B cell (primary cell): ENCODE measurements at regions of chr15 and their contacts with region 1.

Region 1: GRCh38 chr15:74956648-74957300 is at the start of gene RPP25:
- DNase-seq: peak; percentile 84
- ATAC-seq: peak; percentile 91
- H3K4me3 ChIP-seq: peak within 1 kb of the TSS; percentile 39 to 80 (median 53)
- H3K4me3 Mint-ChIP-seq: peak within 1 kb of the TSS; percentile 85
- H3K27ac ChIP-seq: no peak within 1 kb of the TSS
- H3K27ac Mint-ChIP-seq: no peak within 1 kb of the TSS
- H3K4me1 ChIP-seq: peaks cover 38 to 40% of the 10 kb centered on the region in 2 donors
- H3K4me1 Mint-ChIP-seq: peaks cover 30% of the 10 kb centered on the region
- H3K27me3 ChIP-seq: peaks cover 0 to 64% (median 37%) of the 10 kb centered on the region in 4 experiments
- H3K27me3 Mint-ChIP-seq: peaks cover 43% of the 10 kb centered on the region
- CTCF ChIP-seq: no peak
- total RNA-seq, gene RPP25: 3.1 and 4.4 TPM in 2 replicates

Region 2: DNA sequence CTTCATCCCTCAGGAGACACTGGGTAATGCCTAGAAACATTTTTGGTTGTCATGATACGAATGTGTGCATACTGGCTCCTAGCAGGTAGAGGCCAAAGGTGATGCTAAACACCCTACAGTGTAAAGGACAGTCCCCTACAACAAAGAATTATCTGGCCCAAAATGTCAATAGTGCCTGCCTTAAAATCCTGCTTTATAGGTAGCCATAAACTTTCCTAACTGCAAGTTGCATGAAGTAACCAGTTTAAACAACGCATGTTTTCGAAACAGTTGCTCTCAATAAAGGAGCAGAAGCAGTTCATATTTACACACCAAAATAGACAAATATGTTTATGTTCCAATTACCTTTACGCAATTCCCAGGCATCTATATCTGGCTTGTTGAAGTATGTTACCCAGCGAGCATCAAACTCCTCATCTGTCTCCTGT is 28.0 kb before region 1 on chr15:
- CTCF ChIA-PET with region 1: no interaction called
- POLR2A ChIA-PET with region 1: no interaction called
- intact Hi-C with region 1: no loop called
- DNase-seq: no peak
- ATAC-seq: no peak
- H3K4me3 ChIP-seq: no peak overlapping the region
- H3K4me3 Mint-ChIP-seq: no peak overlapping the region
- H3K27ac ChIP-seq: no peak overlapping the region
- H3K27ac Mint-ChIP-seq: no peak overlapping the region
- H3K4me1 ChIP-seq: peaks cover 3 to 8% of the 10 kb centered on the region in 2 donors
- H3K4me1 Mint-ChIP-seq: peaks cover 15% of the 10 kb centered on the region
- H3K27me3 ChIP-seq: no peaks in the 10 kb centered on the region
- H3K27me3 Mint-ChIP-seq: no peaks in the 10 kb centered on the region
- CTCF ChIP-seq: no peak

Region 3: DNA sequence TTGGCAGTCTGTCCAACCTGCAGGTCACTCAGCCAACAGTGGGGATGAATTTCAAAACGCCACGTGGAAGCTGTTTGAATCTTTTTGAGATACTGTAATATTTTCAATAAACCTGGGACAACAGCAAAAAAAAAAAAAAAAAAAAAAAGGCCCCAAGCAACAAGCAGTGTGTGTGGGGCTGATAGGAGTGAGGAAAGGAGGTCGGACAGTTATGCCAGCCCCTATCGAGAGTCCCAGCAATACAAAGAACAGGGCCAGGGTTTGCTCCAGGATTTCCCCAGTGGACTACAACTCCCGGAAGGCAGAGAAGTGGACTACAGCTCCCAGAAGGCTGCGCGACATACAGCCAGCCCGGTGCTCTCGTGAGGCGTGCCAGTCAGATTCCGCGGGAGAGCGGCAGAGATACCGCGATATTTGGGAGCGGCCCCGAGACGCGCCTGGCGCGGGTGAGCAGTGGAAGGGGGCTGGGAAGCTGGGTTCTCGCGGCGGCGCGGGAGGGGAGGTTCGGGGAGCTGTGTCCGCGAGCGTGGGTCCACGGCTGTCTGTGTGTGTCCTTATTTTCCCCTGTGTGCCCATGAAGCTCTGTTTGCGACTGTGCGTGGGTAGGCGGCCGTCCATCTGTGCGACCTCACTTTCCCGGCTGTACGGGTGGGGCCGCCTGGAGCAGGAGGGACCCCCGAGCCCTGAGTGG is 66.6 kb after region 1 on chr15 and contains the start of gene PPCDC:
- CTCF ChIA-PET with region 1: interaction called, 8 read pairs
- POLR2A ChIA-PET with region 1: no interaction called
- intact Hi-C with region 1: loop called (anchors 1 kb)
- DNase-seq: peak; percentile 93
- ATAC-seq: peak; percentile 100
- H3K4me3 ChIP-seq: peak within 1 kb of the TSS; percentile 72 to 96 (median 94)
- H3K4me3 Mint-ChIP-seq: peak within 1 kb of the TSS; percentile 97
- H3K27ac ChIP-seq: peak within 1 kb of the TSS; percentile 49 to 72
- H3K27ac Mint-ChIP-seq: peak within 1 kb of the TSS; percentile 94
- H3K4me1 ChIP-seq: peaks cover 5 to 18% of the 10 kb centered on the region in 2 donors
- H3K4me1 Mint-ChIP-seq: peaks cover 14% of the 10 kb centered on the region
- H3K27me3 ChIP-seq: peaks cover 0 to 33% (median 15%) of the 10 kb centered on the region in 4 experiments
- H3K27me3 Mint-ChIP-seq: peaks cover 23% of the 10 kb centered on the region
- CTCF ChIP-seq: no peak
- total RNA-seq, gene PPCDC: 14.8 and 15.1 TPM in 2 replicates